PC-3 (cell line): ENCODE measurements at regions of chr7 and their contacts with region 1.

Region 1: GRCh38 chr7:89029864-89030263 is 234.3 kb upstream of the TEX47 start:
- DNase-seq: peak; percentile 45
- ATAC-seq: peak; percentile 55
- H3K4me3 ChIP-seq: no peak overlapping the region
- H3K27ac ChIP-seq: no peak overlapping the region
- H3K4me1 ChIP-seq: peaks cover 26% of the 10 kb centered on the region
- H3K27me3 ChIP-seq: no peaks in the 10 kb centered on the region
- CTCF ChIP-seq: no peak

Region 2: GRCh38 chr7:89002981-89003956 is 26.6 kb before region 1 on chr7:
- CTCF ChIA-PET with region 1: no interaction called
- POLR2A ChIA-PET with region 1: no interaction called
- intact Hi-C with region 1: no loop called
- DNase-seq: no peak
- ATAC-seq: no peak
- H3K4me3 ChIP-seq: no peak overlapping the region
- H3K27ac ChIP-seq: no peak overlapping the region
- H3K4me1 ChIP-seq: no peaks in the 10 kb centered on the region
- H3K27me3 ChIP-seq: no peaks in the 10 kb centered on the region
- CTCF ChIP-seq: no peak

Region 3: GRCh38 chr7:89076971-89077370 is 47.1 kb after region 1 on chr7:
- CTCF ChIA-PET with region 1: no interaction called
- POLR2A ChIA-PET with region 1: interaction called, 5 read pairs
- intact Hi-C with region 1: loop called (anchors 2 kb)
- DNase-seq: peak; percentile 55
- ATAC-seq: peak; percentile 20; the same call in 1 of the 2 replicates
- H3K4me3 ChIP-seq: no peak overlapping the region
- H3K27ac ChIP-seq: 0 out of 2 replicates have a peak overlapping the region, but pooled peaks have one; percentile 20
- H3K4me1 ChIP-seq: peaks cover 14% of the 10 kb centered on the region
- H3K27me3 ChIP-seq: no peaks in the 10 kb centered on the region
- CTCF ChIP-seq: no peak

Region 4: DNA sequence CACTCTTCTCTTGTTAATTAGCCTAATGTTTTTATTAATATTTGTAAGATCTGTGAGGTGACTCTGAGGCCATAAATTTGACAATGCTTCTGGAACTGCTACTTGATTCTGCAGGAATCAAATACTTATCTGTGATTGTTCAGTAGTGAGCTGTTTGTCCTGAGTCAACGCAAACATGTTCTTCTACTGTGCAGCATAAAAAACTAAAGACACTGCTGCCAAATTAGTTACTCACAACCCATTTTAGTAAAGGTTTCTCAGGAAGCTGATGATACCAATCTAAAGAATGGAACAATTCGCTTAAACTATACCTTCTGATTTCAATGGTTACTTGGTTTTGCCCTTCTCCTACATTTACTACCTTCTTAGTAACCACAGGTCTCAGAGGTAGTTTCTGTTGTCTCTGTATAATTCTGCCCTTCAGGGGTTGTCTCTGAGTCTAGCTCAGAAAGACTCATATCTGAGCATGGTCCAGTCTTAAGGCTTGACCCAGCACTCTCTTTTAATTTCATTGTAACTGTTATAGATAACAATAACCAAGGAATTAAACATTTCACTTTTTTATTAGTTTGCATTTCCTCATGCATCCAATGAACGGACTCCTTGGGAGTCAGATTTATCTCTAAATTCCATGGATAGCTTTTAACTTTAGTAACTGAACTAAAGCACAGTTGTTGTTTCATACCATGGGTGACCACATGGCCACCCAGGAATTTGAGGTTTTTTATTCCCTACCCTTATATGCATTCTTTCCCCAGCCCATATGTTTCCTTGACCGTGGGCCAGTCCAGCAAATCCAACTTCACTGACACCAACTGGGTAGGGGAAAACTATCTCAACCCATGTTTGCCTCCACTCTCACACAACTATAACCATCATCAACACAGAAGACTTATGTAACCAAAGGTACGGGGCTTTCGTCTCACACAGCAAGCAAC is 75.2 kb after region 1 on chr7:
- CTCF ChIA-PET with region 1: no interaction called
- POLR2A ChIA-PET with region 1: no interaction called
- intact Hi-C with region 1: no loop called
- DNase-seq: peak; percentile 70
- ATAC-seq: peak; percentile 93
- H3K4me3 ChIP-seq: no peak overlapping the region
- H3K27ac ChIP-seq: peak overlapping the region; percentile 79
- H3K4me1 ChIP-seq: peaks cover 20% of the 10 kb centered on the region
- H3K27me3 ChIP-seq: no peaks in the 10 kb centered on the region
- CTCF ChIP-seq: no peak

Region 5: DNA sequence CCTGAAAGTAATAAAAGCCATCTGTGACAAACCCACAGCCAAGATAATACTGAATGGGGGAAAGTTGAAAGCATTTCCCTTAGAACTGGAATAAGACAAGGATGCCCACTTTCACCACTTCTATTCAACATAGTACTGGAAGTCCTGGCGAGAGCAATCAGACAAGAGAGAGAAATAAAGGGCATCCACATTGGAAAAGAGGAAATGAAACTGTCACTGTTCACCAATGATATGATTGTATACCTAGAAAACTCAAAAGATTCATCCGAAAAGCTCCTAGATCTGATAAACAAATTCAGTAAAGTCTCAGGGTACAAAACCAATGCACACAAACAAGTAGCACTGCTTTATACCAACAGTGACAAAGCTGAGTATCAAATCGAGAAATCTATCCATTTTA is 347.4 kb after region 1 on chr7:
- CTCF ChIA-PET with region 1: no interaction called
- POLR2A ChIA-PET with region 1: no interaction called
- intact Hi-C with region 1: no loop called
- DNase-seq: no peak
- ATAC-seq: no peak
- H3K4me3 ChIP-seq: no peak overlapping the region
- H3K27ac ChIP-seq: no peak overlapping the region
- H3K4me1 ChIP-seq: no peaks in the 10 kb centered on the region
- H3K27me3 ChIP-seq: no peaks in the 10 kb centered on the region
- CTCF ChIP-seq: no peak